CD4-positive, alpha-beta memory T cell (primary cell): ENCODE measurements at regions of chr3 and their contacts with region 1.

Region 1: GRCh38 chr3:42443819-42444436 is 33.5 kb upstream of the LYZL4 start:
- DNase-seq: peak; percentile 47 to 63 (median 59)
- H3K4me3 ChIP-seq: no peak overlapping the region
- H3K4me3 Mint-ChIP-seq: no peak overlapping the region
- H3K27ac ChIP-seq: no peak overlapping the region
- H3K27ac Mint-ChIP-seq: no peak overlapping the region
- H3K4me1 ChIP-seq: no peaks in the 10 kb centered on the region
- H3K4me1 Mint-ChIP-seq: no peaks in the 10 kb centered on the region
- H3K27me3 ChIP-seq: no peaks in the 10 kb centered on the region
- H3K27me3 Mint-ChIP-seq: peaks cover 4 to 18% of the 10 kb centered on the region in 2 donors

Region 2: GRCh38 chr3:42118762-42119361 is 325.1 kb before region 1 on chr3:
- CTCF ChIA-PET with region 1: interaction called, 4 read pairs
- POLR2A ChIA-PET with region 1: no interaction called
- intact Hi-C with region 1: loop called (anchors 2 kb)
- DNase-seq: no peak
- H3K4me3 ChIP-seq: no peak overlapping the region
- H3K4me3 Mint-ChIP-seq: no peak overlapping the region
- H3K27ac ChIP-seq: no peak overlapping the region
- H3K27ac Mint-ChIP-seq: peak overlapping the region in 3 of 7 donors; percentile 37 to 61 (median 43)
- H3K4me1 ChIP-seq: no peaks in the 10 kb centered on the region
- H3K4me1 Mint-ChIP-seq: peaks cover 13 to 17% (median 16%) of the 10 kb centered on the region in 4 donors
- H3K27me3 ChIP-seq: no peaks in the 10 kb centered on the region
- H3K27me3 Mint-ChIP-seq: no peaks in the 10 kb centered on the region

Region 3: GRCh38 chr3:42229942-42230688 is 213.8 kb before region 1 on chr3:
- CTCF ChIA-PET with region 1: no interaction called
- POLR2A ChIA-PET with region 1: no interaction called
- intact Hi-C with region 1: loop called (anchors 5 kb)
- DNase-seq: no peak
- H3K4me3 ChIP-seq: no peak overlapping the region
- H3K4me3 Mint-ChIP-seq: no peak overlapping the region
- H3K27ac ChIP-seq: no peak overlapping the region
- H3K27ac Mint-ChIP-seq: peak overlapping the region in 1 of 7 donors; percentile 67
- H3K4me1 ChIP-seq: no peaks in the 10 kb centered on the region
- H3K4me1 Mint-ChIP-seq: no peaks in the 10 kb centered on the region
- H3K27me3 ChIP-seq: peaks cover 5% of the 10 kb centered on the region
- H3K27me3 Mint-ChIP-seq: peaks cover 13 to 19% of the 10 kb centered on the region in 2 donors

Region 4: DNA sequence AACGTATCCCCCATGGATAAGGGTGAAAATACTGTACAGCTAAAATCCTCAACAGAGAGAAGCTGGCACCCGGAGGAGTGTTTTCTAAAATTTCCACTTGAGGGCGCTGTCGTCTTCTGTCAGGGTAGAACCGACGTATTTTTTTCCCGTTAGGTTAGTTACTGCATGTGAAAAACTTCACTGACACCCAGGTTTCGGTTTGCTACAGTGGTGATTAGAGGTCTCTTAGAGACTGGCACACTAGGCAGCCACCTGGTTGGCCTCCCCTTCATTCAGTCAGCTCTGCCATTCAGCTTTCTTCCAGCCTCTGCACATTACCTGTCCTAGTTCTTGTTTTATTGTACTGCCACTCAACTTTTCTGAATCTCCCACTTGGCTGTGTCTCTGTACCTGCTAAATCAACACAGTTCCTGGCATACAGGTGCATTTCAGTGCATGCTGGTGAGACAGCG is 196.3 kb before region 1 on chr3:
- CTCF ChIA-PET with region 1: interaction called, 57 read pairs
- POLR2A ChIA-PET with region 1: no interaction called
- intact Hi-C with region 1: loop called (anchors 1 kb)
- DNase-seq: peak; percentile 55 to 64 (median 59)
- H3K4me3 ChIP-seq: no peak overlapping the region
- H3K4me3 Mint-ChIP-seq: peak overlapping the region in 3 of 8 donors; percentile 20 to 56 (median 45)
- H3K27ac ChIP-seq: no peak overlapping the region
- H3K27ac Mint-ChIP-seq: peak overlapping the region in 2 of 7 donors; percentile 14 to 26
- H3K4me1 ChIP-seq: peaks cover 3% of the 10 kb centered on the region
- H3K4me1 Mint-ChIP-seq: peaks cover 4 to 9% (median 7%) of the 10 kb centered on the region in 4 donors
- H3K27me3 ChIP-seq: no peaks in the 10 kb centered on the region
- H3K27me3 Mint-ChIP-seq: peaks cover 6 to 15% of the 10 kb centered on the region in 2 donors

Region 5: DNA sequence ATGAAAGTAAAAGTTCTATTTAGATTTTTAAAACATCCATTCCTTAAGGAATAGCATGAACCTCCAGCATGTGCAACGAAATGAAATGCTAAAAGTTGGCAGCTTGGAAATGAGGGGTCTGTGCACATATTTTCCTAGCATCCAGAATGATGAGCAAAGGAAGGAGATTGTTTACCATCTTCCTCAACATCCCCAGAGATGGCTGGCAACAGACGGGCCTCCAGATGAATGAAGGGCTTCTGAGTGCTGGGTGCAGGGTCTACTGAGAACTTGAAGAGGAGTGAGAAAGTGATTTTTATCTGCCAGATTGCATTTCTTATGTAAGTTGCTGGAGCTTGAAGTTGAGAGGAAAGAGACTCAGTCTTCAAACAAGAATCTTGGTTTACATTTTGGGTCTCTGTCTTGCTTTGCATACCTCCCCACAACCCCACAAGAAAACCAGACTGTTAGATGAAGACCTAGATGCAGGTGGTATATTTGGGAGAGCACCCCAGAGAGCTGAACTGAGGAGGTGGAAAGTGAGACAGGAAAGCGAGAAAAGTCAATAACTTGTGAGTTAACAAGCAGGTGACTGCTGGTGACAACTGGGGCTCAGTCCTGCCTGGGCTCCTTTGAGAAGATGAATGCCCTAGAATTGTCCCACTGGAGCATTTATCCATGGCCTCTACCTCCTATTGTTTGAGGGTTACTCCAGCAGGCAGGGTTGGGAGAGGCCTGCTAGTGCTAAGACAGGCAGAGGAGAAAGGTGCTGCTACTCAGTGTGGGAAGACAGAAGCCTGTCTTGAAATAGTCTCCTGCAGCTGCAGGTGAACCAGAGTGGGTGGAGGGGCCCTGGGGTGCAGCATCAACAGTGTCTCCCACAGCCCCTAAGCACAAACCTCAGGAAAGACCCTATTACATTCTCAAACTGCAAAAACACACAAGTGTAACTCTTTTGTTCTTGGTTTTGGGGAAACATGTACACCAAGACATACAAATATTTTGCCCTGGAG is 167.5 kb before region 1 on chr3:
- CTCF ChIA-PET with region 1: no interaction called
- POLR2A ChIA-PET with region 1: no interaction called
- intact Hi-C with region 1: no loop called
- DNase-seq: no peak
- H3K4me3 ChIP-seq: no peak overlapping the region
- H3K4me3 Mint-ChIP-seq: no peak overlapping the region
- H3K27ac ChIP-seq: no peak overlapping the region
- H3K27ac Mint-ChIP-seq: no peak overlapping the region
- H3K4me1 ChIP-seq: no peaks in the 10 kb centered on the region
- H3K4me1 Mint-ChIP-seq: no peaks in the 10 kb centered on the region
- H3K27me3 ChIP-seq: no peaks in the 10 kb centered on the region
- H3K27me3 Mint-ChIP-seq: peaks cover 9 to 12% of the 10 kb centered on the region in 2 donors

Region 6: GRCh38 chr3:42590989-42591756 is 147.2 kb after region 1 on chr3:
- CTCF ChIA-PET with region 1: no interaction called
- POLR2A ChIA-PET with region 1: no interaction called
- intact Hi-C with region 1: no loop called
- DNase-seq: no peak
- H3K4me3 ChIP-seq: peak overlapping the region; percentile 54 to 70
- H3K4me3 Mint-ChIP-seq: peak overlapping the region; percentile 96 to 100 (median 98)
- H3K27ac ChIP-seq: peak overlapping the region; percentile 74
- H3K27ac Mint-ChIP-seq: peak overlapping the region; percentile 95 to 100 (median 99)
- H3K4me1 ChIP-seq: peaks cover 34% of the 10 kb centered on the region
- H3K4me1 Mint-ChIP-seq: peaks cover 18 to 42% (median 31%) of the 10 kb centered on the region in 4 donors
- H3K27me3 ChIP-seq: no peaks in the 10 kb centered on the region
- H3K27me3 Mint-ChIP-seq: no peaks in the 10 kb centered on the region

Region 7: GRCh38 chr3:42701142-42702065 is 257.5 kb after region 1 on chr3:
- CTCF ChIA-PET with region 1: no interaction called
- POLR2A ChIA-PET with region 1: no interaction called
- intact Hi-C with region 1: no loop called
- DNase-seq: peak; percentile 56 to 64 (median 61)
- H3K4me3 ChIP-seq: no peak overlapping the region
- H3K4me3 Mint-ChIP-seq: no peak overlapping the region
- H3K27ac ChIP-seq: no peak overlapping the region
- H3K27ac Mint-ChIP-seq: peak overlapping the region in 2 of 7 donors; percentile 52 to 55
- H3K4me1 ChIP-seq: peaks cover 4% of the 10 kb centered on the region
- H3K4me1 Mint-ChIP-seq: peaks cover 5 to 22% (median 8%) of the 10 kb centered on the region in 4 donors
- H3K27me3 ChIP-seq: no peaks in the 10 kb centered on the region
- H3K27me3 Mint-ChIP-seq: peaks cover 2 to 6% of the 10 kb centered on the region in 2 donors

Region 8: DNA sequence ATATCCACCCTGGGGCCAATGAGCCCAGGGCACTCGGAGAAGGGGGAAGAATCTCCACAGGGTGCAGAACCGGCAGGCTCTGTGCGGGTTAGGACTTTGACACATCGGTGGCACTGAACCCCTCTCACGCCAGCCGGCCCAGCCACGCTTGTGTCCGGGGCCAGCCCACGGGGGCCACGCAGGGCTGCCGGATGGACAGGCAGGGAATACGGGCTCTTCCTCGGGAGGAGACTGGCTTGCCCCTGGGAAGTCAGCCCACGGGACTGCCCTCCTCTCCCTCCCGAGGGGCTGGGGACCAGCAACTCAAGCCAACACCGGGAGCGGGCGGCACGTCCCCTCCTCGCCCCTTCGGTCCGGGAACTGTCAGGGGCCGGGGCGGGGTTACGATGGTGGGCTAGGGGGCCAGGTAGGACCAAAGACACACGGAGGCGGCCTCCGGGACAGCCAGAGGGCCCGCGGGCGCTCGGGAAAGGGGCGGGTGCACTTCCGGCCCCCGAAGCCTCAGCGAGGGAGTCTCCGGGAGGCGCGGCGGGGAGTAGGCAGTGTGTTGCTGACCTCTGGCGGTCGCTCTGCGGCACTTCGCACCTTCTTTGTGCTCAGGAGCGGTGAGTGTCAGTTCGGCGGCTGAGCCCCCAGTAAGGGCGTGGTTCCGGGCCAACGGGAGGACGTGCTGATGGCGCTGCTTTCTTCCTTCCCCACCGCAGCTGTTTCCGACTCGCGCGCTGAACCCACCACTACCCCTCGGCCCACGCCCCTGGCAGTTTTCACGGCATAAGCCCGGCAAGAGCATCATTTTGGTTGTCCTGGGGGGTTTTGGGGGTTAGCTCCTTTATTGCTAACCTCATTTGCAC is 436.9 kb after region 1 on chr3:
- CTCF ChIA-PET with region 1: no interaction called
- POLR2A ChIA-PET with region 1: no interaction called
- intact Hi-C with region 1: no loop called
- DNase-seq: peak; percentile 83 to 86 (median 85)
- H3K4me3 ChIP-seq: peak overlapping the region in 1 of 2 donors; percentile 74
- H3K4me3 Mint-ChIP-seq: peak overlapping the region; percentile 77 to 89 (median 82)
- H3K27ac ChIP-seq: peak overlapping the region; percentile 56
- H3K27ac Mint-ChIP-seq: peak overlapping the region; percentile 26 to 87 (median 71)
- H3K4me1 ChIP-seq: peaks cover 11% of the 10 kb centered on the region
- H3K4me1 Mint-ChIP-seq: peaks cover 9 to 15% (median 12%) of the 10 kb centered on the region in 4 donors
- H3K27me3 ChIP-seq: no peaks in the 10 kb centered on the region
- H3K27me3 Mint-ChIP-seq: peaks cover 1 to 3% of the 10 kb centered on the region in 2 donors